PC-9 (cell line): ENCODE measurements at regions of chr18 and their contacts with region 1.

Region 1: GRCh38 chr18:34976899-34977837 is 64.0 kb upstream of the MAPRE2 start:
- DNase-seq: peak; percentile 37 to 66
- H3K4me3 ChIP-seq: peak overlapping the region; percentile 62
- H3K27ac ChIP-seq: no peak overlapping the region
- H3K4me1 ChIP-seq: peaks cover 20% of the 10 kb centered on the region
- H3K27me3 ChIP-seq: no peaks in the 10 kb centered on the region
- CTCF ChIP-seq: no peak

Region 2: DNA sequence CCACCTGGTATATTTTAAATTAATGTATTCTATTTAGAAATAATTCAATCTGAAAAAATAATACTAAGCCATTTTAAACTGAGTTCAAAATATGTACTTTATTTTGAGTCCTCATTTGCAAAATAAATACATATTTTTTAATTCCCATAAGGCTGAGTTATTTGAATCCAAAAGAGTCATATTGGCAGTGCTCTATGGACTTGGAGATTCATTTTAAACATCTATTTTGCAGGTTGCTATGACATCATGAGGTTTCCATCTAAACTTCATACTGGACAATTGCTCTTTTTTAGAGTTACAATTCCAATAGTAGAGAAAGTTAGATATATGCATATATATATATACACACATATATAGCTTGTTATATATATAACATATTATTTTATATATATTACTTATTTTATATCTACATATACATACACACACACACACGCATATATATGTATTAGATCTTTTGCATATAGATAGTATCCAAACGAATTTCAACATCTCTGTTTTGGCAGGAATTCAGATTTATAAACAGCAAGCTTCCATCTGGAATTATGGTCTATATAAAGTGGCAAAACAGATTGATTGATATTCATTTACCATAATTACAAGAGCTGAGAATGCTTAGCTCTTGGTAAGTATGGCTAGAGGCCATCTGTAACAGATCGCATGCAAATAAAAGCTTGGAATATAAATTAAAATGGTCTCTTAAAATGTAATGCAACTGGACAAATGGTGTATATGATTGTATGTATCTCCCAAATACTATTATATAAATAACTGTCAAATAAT is 787.3 kb before region 1 on chr18:
- CTCF ChIA-PET with region 1: no interaction called
- POLR2A ChIA-PET with region 1: no interaction called
- intact Hi-C with region 1: no loop called
- DNase-seq: no peak
- H3K4me3 ChIP-seq: no peak overlapping the region
- H3K27ac ChIP-seq: no peak overlapping the region
- H3K4me1 ChIP-seq: no peaks in the 10 kb centered on the region
- H3K27me3 ChIP-seq: no peaks in the 10 kb centered on the region
- CTCF ChIP-seq: no peak

Region 3: DNA sequence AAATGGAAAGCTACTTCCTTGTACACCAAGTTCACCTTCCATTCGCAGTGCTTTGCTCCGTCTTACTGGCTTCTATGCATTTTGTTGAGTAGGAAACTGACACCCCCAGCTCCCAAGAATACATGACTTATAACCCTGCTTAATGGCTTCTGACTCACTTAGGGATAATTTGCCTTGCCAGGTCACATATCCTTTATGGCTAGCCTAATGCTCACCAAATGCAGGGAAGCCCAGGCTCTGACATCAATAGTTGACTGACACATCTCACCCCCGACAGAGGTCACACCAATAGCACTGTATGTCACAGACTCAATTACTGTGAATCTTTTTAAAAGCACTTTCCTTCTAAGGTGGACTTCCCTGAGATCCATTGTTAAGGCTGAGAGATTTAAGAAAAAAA is 119.8 kb before region 1 on chr18:
- CTCF ChIA-PET with region 1: no interaction called
- POLR2A ChIA-PET with region 1: no interaction called
- intact Hi-C with region 1: loop called (anchors 1 kb)
- DNase-seq: no peak
- H3K4me3 ChIP-seq: no peak overlapping the region
- H3K27ac ChIP-seq: no peak overlapping the region
- H3K4me1 ChIP-seq: no peaks in the 10 kb centered on the region
- H3K27me3 ChIP-seq: no peaks in the 10 kb centered on the region
- CTCF ChIP-seq: no peak

Region 4: DNA sequence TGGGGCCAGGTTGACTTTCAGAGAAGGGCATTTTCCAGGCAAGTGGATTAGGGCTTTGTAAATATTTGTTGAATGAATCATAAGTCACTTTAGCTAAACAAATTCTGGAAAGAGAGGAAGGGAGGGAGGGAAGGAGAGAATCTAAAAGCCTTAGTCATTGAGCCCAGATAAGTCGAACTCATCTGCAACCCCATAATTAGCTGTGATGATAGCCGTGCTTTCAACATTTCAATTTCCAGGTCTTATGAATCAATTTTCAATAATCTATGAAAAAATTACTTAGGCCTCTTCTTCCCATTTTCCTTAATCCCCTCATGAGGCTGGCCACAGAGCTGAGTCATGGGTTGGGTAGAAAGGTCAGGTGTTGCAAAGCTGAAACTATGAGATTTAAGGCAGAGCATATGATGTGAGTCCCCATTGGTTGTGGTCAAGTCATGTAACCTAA is 47.8 kb before region 1 on chr18:
- CTCF ChIA-PET with region 1: no interaction called
- POLR2A ChIA-PET with region 1: no interaction called
- intact Hi-C with region 1: loop called (anchors 10 kb)
- DNase-seq: peak in 1 of 2 experiments; percentile 56
- H3K4me3 ChIP-seq: no peak overlapping the region
- H3K27ac ChIP-seq: peak overlapping the region; percentile 75
- H3K4me1 ChIP-seq: peaks cover 17% of the 10 kb centered on the region
- H3K27me3 ChIP-seq: no peaks in the 10 kb centered on the region
- CTCF ChIP-seq: no peak

Region 5: DNA sequence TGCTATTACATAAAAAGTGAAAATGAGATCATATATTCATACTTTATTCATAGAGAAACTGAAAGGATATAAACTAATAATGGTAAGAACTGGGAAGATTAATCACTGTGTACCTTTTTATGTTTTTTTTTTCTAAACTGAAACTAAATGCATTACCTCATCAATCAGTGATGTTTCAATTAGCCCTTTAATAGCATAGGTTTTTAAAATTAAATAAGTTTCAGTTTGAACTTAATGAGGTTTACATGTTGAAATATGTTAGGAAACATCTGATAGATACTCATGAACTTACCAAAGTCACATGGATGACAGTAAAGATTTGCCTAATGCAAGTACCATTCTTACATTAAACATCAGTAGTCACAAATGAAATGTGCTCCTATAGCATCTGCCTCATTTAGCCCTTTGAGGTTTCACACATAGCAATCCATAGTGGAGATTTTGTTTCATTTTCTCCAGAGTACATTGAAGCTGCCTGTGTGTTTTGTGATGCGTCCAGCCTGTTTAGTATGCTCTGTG is 72.9 kb after region 1 on chr18:
- CTCF ChIA-PET with region 1: no interaction called
- POLR2A ChIA-PET with region 1: no interaction called
- intact Hi-C with region 1: no loop called
- DNase-seq: no peak
- H3K4me3 ChIP-seq: no peak overlapping the region
- H3K27ac ChIP-seq: no peak overlapping the region
- H3K4me1 ChIP-seq: no peaks in the 10 kb centered on the region
- H3K27me3 ChIP-seq: no peaks in the 10 kb centered on the region
- CTCF ChIP-seq: no peak

Region 6: DNA sequence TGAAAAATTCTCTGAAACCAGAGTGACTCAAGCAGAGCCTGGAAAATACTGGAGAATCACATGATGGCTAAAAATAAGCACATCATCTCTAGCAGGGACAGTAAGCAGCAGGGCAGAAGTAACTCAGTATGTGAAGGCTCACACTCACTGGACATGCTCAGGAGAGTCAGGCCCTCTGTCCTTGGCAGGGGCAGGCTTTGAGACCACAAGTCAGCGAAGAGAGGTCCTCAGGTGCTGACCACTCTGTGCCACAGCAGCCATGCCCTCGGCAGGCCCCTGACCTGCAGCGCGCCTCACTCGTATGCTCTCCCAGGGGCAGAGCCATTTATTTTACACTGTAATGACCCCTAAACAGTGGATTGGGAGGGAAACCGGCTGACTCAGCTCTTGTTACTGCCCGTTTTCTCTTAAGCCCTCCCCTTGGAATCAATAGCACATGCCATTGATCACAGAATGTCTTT is 140.8 kb after region 1 on chr18:
- CTCF ChIA-PET with region 1: no interaction called
- POLR2A ChIA-PET with region 1: no interaction called
- intact Hi-C with region 1: no loop called
- DNase-seq: no peak
- H3K4me3 ChIP-seq: no peak overlapping the region
- H3K27ac ChIP-seq: no peak overlapping the region
- H3K4me1 ChIP-seq: no peaks in the 10 kb centered on the region
- H3K27me3 ChIP-seq: no peaks in the 10 kb centered on the region
- CTCF ChIP-seq: no peak